ENCODE measurements at regions of chr2 and their contacts with region 1.

Region 1: DNA sequence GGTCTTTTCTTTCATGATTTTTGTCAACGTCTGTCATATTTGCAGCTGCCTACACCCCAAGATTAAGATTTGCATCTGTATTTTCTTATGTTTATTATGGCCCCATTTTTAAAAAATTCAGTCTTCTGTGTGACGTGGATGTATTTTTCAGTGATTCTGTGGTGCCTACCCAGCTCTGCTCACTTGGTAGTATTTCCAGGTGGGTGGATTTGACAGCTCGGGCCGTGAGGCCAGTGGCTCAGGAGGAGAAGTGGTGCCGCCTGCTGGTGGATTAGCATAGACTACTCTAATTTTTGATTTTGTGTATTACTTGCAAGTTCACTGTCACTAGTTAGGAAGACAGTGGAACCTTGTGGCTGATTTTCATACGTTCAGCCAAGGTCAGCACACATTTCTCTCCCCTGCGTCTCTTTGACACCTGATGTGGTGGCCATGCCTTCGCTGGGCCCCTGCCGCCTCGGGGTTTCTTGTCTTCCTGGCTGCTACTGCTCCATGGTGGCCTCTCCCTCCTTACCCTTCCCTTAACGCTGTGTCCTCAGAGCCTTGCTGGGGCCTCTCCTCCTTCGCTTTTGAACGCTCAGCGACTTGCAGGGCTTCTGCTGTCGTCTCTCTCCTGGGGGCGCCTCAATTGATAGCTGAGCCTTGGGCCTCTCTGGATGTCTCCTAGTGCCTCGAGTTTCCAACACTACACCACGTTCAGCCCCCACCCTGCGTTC is 89.3 kb downstream of the DGKD start:
- DNase-seq: peak; percentile 81 to 92 (median 88)
- H3K4me3 ChIP-seq: no peak overlapping the region
- H3K27ac ChIP-seq: no peak overlapping the region
- H3K4me1 ChIP-seq: no peaks in the 10 kb centered on the region
- H3K27me3 ChIP-seq: no peaks in the 10 kb centered on the region

Region 2: GRCh38 chr2:233323851-233324250 is 119.8 kb before region 1 on chr2:
- CTCF ChIA-PET with region 1: no interaction called
- POLR2A ChIA-PET with region 1: no interaction called
- DNase-seq: no peak
- H3K4me3 ChIP-seq: no peak overlapping the region
- H3K27ac ChIP-seq: no peak overlapping the region
- H3K4me1 ChIP-seq: no peaks in the 10 kb centered on the region
- H3K27me3 ChIP-seq: no peaks in the 10 kb centered on the region

Region 3: DNA sequence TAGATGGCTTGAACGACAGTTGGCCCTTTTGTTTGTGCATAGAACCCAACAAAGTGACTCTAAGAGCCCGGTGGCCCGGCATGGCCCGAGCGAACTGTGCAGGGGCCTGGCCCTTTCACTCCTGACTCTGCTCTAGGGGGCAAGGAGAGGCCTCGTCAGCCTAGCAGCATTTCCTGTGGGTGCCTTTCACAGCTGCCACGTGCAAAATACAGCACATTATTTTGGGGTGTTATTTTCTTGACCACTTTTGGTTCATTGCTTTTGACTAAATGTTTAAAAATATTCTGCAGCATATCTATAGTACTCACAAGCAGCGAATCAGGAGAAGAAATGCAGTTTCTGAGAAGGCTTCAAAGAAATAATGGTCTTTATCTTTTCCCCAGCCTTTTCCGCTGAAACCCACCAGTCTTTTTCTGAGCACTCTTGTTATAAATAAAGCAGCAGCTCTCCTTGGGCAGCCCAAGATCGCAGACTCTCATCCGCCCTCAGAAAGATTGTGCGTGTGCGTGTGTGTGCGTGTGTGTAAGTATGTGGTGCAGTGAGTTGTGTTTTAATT is 58.1 kb before region 1 on chr2:
- CTCF ChIA-PET with region 1: interaction called, 14 read pairs
- POLR2A ChIA-PET with region 1: no interaction called
- DNase-seq: peak; percentile 89 to 95 (median 92)
- H3K4me3 ChIP-seq: peak overlapping the region in 4 of 7 experiments; percentile 4 to 52 (median 31)
- H3K27ac ChIP-seq: no peak overlapping the region
- H3K4me1 ChIP-seq: peaks cover 3 to 53% (median 43%) of the 10 kb centered on the region in 4 experiments
- H3K27me3 ChIP-seq: no peaks in the 10 kb centered on the region

Region 4: GRCh38 chr2:233395687-233396086 is 47.9 kb before region 1 on chr2:
- CTCF ChIA-PET with region 1: interaction called, 162 read pairs
- POLR2A ChIA-PET with region 1: no interaction called
- DNase-seq: no peak
- H3K4me3 ChIP-seq: no peak overlapping the region
- H3K27ac ChIP-seq: no peak overlapping the region
- H3K4me1 ChIP-seq: peaks cover 0 to 20% (median 17%) of the 10 kb centered on the region in 4 experiments
- H3K27me3 ChIP-seq: no peaks in the 10 kb centered on the region

Region 5: DNA sequence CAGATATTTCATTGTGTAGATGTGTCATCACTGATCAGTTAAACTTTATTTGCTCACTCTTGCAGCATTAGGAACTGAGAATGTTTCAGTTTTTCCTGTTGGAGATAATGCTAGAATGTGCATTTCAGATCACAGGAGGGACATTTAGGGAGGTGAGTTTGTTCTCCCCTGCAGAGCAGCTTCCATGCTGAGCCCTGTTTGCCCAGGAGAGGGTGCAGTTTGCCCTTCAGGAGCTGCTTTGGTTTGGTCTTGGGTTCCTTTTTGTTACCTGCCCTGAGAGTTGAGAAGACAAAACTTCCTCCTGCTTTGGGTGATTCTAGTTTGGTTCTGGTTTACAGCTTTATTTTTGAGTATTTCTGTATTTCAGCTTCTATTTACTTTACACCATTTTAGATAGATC is 39.4 kb before region 1 on chr2:
- CTCF ChIA-PET with region 1: interaction called, 162 read pairs
- POLR2A ChIA-PET with region 1: interaction called, 4 read pairs
- DNase-seq: peak; percentile 58 to 74 (median 69)
- H3K4me3 ChIP-seq: no peak overlapping the region
- H3K27ac ChIP-seq: no peak overlapping the region
- H3K4me1 ChIP-seq: peaks cover 0 to 25% (median 18%) of the 10 kb centered on the region in 4 experiments
- H3K27me3 ChIP-seq: no peaks in the 10 kb centered on the region

Region 6: DNA sequence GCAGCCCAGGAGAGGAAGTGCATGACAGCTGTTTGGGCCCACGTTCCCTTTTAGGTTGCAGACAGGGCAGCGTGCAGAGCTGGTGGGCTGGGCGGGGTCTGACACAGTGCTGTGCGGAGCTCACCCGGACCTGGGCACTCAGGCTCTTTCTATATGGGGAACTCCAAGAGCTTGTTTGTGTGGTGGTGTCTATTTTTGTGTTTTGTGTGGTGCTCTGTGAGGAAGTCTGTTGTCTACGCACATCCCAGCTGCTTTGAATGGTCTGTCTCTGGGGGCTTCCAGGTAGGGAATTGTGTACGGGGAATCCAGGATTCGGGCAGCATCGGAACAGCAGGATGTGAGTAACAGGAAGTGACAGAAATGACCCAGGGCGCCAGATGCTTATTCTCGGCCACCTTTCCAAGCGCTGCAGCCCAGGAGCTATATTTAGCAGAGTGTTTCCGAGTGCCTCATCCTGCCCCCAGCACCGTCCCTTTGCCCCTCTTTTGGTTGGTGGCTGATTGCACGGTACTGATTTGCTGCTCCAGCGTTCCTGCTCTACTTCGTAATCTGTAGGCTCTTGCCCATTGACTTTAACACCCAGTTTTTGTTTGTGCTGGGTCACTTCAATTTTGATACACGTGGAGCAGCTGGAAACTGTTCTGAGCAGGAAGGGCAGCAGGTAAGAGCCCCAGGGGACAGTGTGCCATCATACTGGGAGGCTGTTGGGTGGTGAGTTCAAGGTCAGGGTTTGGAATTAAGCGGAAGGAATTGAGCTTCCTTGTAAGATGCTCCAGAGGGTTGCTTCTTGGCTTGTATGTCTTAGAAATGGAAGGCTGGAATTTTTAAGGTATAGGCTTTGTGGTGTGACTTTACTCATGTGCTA is 24.6 kb before region 1 on chr2:
- CTCF ChIA-PET with region 1: interaction called, 38 read pairs
- POLR2A ChIA-PET with region 1: no interaction called
- DNase-seq: peak; percentile 25 to 85 (median 80)
- H3K4me3 ChIP-seq: peak overlapping the region in 6 of 7 experiments; percentile 4 to 52 (median 37)
- H3K27ac ChIP-seq: no peak overlapping the region
- H3K4me1 ChIP-seq: peaks cover 4 to 26% (median 21%) of the 10 kb centered on the region in 4 experiments
- H3K27me3 ChIP-seq: no peaks in the 10 kb centered on the region

Region 7: GRCh38 chr2:233426619-233427342 is 16.8 kb before region 1 on chr2:
- CTCF ChIA-PET with region 1: interaction called, 38 read pairs
- POLR2A ChIA-PET with region 1: no interaction called
- DNase-seq: peak in 2 of 3 donors; percentile 32 to 38
- H3K4me3 ChIP-seq: no peak overlapping the region
- H3K27ac ChIP-seq: no peak overlapping the region
- H3K4me1 ChIP-seq: peaks cover 0 to 8% (median 2%) of the 10 kb centered on the region in 4 experiments
- H3K27me3 ChIP-seq: no peaks in the 10 kb centered on the region

Region 8: GRCh38 chr2:233486778-233487552 is 43.3 kb after region 1 on chr2:
- CTCF ChIA-PET with region 1: no interaction called
- POLR2A ChIA-PET with region 1: no interaction called
- DNase-seq: no peak
- H3K4me3 ChIP-seq: no peak overlapping the region
- H3K27ac ChIP-seq: no peak overlapping the region
- H3K4me1 ChIP-seq: no peaks in the 10 kb centered on the region
- H3K27me3 ChIP-seq: no peaks in the 10 kb centered on the region